ENCODE measurements at regions of chr17 and their contacts with region 1.

Region 1: GRCh38 chr17:58517734-58518609 is 3.5 kb upstream of the MTMR4 start:
- DNase-seq: peak; percentile 100
- H3K4me3 Mint-ChIP-seq: peak overlapping the region; percentile 89
- H3K27ac Mint-ChIP-seq: peak overlapping the region; percentile 95
- H3K4me1 Mint-ChIP-seq: peaks cover 26% of the 10 kb centered on the region
- H3K27me3 Mint-ChIP-seq: no peaks in the 10 kb centered on the region
- CTCF ChIP-seq: no peak

Region 2: DNA sequence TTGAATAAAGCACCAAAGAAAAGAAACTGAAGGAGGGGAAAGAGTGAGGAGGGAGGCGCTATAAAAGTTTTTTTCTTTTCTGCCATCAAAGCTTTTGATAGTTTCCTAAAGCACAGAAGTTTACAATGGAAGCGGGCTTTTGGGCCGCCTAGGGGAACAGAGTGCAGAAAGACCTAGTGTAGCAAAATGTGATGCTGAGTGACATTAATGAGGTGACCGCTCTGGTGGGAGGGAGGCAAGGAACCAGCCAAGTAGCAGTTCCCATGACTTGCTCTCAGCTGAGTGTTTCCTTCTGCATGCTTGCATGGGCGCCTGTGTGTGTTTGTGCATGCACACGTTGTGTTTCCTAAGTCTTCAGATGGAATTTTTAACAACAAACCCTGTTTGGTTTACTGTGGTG is 1246.2 kb before region 1 on chr17:
- CTCF ChIA-PET with region 1: no interaction called
- POLR2A ChIA-PET with region 1: no interaction called
- intact Hi-C with region 1: no loop called
- DNase-seq: no peak
- H3K4me3 Mint-ChIP-seq: no peak overlapping the region
- H3K27ac Mint-ChIP-seq: no peak overlapping the region
- H3K4me1 Mint-ChIP-seq: no peaks in the 10 kb centered on the region
- H3K27me3 Mint-ChIP-seq: no peaks in the 10 kb centered on the region
- CTCF ChIP-seq: no peak

Region 3: DNA sequence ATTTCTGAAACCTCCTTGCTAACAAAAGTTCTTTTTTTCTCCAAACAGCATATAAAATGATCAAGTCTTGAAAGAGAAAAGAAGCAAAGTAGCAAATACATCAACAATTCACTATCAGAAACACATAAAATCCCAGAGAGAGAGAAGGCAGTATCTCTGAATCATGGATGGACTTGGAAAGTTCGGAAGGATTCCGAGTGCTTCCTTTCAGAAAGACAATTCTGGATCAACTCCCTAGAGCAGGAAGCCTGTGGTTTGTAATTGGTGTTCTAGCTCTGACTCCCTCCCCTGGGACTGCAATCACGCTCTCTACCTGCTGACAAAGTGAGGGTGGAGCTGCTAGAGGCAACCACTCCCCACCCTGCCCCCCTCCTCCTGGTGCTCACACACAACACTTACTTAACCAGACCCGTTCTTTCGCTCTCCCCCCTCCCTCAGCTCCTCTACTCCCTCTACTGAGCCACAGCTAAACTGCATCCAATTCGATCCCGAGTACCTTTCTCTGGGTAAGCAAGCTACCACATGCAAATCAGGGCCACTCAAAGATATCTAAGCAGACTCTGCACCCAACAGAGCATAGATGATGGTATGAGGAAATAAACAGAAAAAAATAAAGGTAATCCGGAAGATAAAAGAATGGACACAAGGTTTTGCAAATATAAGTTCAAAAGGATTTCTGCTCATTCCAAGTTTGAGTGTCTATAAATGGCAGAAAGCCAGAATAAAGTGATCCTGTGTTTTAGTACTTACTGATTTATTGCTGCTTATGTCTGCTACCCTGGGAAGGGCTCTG is 100.5 kb before region 1 on chr17 and contains the start of gene RNF43:
- CTCF ChIA-PET with region 1: interaction called, 3 read pairs
- POLR2A ChIA-PET with region 1: interaction called, 21 read pairs
- intact Hi-C with region 1: no loop called
- DNase-seq: peak; percentile 99
- H3K4me3 Mint-ChIP-seq: peak within 1 kb of the TSS; percentile 84
- H3K27ac Mint-ChIP-seq: peak within 1 kb of the TSS; percentile 95
- H3K4me1 Mint-ChIP-seq: peaks cover 30% of the 10 kb centered on the region
- H3K27me3 Mint-ChIP-seq: peaks cover 25% of the 10 kb centered on the region
- CTCF ChIP-seq: peak; percentile 75
- total RNA-seq, gene RNF43: 6.7 and 7.9 TPM in 2 replicates

Region 4: DNA sequence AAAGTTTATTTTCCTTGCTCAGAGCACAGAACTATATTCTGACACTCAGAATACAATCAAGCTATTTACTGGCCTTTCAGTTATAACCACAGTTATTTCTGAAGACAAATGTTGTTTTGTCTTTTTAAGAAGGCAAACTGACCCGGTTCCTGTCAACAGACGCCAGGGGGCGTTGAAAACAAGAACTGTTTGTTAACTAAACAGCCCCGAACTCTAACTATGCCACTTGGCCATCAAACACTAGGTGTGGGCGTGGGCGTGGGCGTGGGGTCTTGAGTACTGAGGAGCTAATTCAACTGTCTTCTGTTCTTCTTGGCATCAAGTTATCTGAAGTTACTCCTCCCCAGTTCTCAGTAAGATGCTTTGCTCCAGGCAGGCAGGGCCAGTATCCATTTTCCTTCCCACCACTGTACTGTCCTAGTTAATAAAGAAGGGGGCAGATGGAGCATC is 59.7 kb after region 1 on chr17:
- CTCF ChIA-PET with region 1: interaction called, 10 read pairs
- POLR2A ChIA-PET with region 1: interaction called, 32 read pairs
- intact Hi-C with region 1: no loop called
- DNase-seq: peak; percentile 70
- H3K4me3 Mint-ChIP-seq: no peak overlapping the region
- H3K27ac Mint-ChIP-seq: no peak overlapping the region
- H3K4me1 Mint-ChIP-seq: peaks cover 6% of the 10 kb centered on the region
- H3K27me3 Mint-ChIP-seq: no peaks in the 10 kb centered on the region
- CTCF ChIP-seq: peak; percentile 53

Region 5: DNA sequence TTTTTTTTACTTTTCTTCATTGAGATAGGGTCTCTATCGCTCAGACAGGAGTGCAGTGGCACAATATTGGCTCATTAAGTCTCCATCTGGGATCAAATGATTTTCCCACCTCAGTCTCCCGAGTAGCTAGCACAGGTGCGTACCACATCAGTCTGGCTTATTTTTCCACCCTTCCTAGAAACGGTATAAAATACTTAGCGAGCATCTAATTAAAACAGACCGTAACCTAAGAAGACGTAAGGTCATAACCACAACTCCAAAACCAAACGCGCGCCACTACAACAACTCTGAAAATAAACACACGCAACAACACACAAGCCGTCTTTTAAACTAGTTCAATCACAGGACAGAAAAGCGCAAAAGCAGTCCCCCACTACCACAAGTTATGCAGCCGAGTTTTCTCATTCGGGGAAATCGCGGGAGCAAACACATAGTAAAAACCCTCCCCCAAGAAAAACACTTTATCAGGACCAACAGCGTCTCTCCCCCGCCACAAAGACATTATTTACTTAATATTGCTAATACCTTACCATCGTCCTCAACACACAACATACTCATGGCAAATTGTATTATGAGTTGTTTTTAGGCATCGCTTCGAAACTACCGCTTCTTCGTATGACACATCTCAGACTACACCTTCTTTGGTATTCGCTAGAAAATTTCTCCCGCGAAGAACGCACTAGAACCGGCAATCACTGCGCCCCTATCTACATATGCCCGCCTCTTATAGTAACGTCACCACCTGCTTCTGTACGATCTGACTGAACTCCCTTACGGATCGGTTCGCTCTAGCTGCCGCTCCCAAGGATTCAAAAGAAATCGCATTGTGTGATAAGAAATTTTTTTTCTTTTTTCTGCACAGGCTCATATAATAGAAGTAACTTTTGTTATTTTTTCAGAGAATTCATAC is 141.1 kb after region 1 on chr17:
- CTCF ChIA-PET with region 1: no interaction called
- POLR2A ChIA-PET with region 1: interaction called, 18 read pairs
- intact Hi-C with region 1: loop called (anchors 1 kb)
- DNase-seq: peak; percentile 97
- H3K4me3 Mint-ChIP-seq: peak overlapping the region; percentile 69
- H3K27ac Mint-ChIP-seq: peak overlapping the region; percentile 99
- H3K4me1 Mint-ChIP-seq: peaks cover 13% of the 10 kb centered on the region
- H3K27me3 Mint-ChIP-seq: no peaks in the 10 kb centered on the region
- CTCF ChIP-seq: no peak

Region 6: DNA sequence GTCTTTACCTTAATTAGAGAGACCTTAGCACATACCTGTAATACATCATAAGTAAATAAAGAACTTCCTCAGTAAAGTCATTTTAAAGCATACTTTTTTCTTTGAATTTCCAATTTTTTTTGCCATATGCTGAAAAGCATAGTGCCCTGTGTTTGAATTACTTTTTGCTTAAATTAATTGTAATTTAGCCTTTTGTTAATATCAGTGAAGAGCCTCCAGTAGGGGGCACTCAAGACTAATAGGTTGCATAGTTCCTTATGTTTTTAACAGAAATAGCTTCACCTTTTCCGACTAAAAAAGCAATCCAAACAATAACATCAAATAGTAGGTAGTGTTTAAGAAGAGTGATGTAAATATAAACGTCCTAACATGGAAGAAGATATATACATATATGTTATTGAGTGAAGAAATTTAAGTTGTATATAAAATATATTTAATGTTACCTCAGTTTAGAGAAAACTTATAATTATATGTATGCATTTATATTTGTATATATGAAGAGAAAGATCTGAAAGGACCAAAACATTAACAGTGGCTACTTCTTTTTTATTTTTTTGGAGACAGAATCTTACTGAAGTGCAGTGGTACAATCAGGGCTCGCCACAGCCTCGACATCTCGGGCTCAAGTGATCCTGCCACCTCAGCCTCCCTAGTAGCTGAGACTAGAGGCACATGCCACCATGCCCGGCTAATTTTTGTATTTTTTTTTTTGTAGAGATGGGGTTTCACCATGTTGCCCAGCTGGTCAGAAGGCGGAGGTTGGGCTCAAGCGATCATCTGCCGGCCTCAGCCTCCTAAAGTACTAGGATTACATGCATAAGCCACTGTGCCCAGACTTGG is 193.2 kb after region 1 on chr17:
- CTCF ChIA-PET with region 1: interaction called, 3 read pairs
- POLR2A ChIA-PET with region 1: interaction called, 7 read pairs
- intact Hi-C with region 1: loop called (anchors 2 kb)
- DNase-seq: peak; percentile 72
- H3K4me3 Mint-ChIP-seq: no peak overlapping the region
- H3K27ac Mint-ChIP-seq: no peak overlapping the region
- H3K4me1 Mint-ChIP-seq: no peaks in the 10 kb centered on the region
- H3K27me3 Mint-ChIP-seq: no peaks in the 10 kb centered on the region
- CTCF ChIP-seq: peak; percentile 78

Region 7: DNA sequence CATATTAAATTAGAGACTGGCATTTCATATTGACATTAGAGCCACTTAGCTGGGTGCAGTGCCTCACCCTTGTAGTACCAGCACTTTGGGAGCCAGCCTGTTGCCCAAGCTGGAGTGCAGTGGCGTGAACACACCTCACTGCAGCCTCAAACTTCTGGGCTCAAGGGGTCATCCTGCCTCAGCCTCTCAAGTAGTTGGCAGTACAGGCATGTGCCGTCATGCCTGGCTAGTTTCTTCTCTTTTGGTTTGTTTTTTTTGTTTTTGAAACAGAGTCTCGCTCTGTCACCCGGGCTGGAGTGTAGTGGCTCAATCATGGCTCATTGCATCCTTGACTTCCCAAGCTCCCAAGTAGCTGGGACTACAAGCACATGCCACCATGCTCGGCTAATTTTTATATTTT is 246.4 kb after region 1 on chr17:
- CTCF ChIA-PET with region 1: no interaction called
- POLR2A ChIA-PET with region 1: no interaction called
- intact Hi-C with region 1: no loop called
- DNase-seq: no peak
- H3K4me3 Mint-ChIP-seq: no peak overlapping the region
- H3K27ac Mint-ChIP-seq: no peak overlapping the region
- H3K4me1 Mint-ChIP-seq: no peaks in the 10 kb centered on the region
- H3K27me3 Mint-ChIP-seq: peaks cover 28% of the 10 kb centered on the region
- CTCF ChIP-seq: no peak

Measured in MCF 10A (cell line).